ENCODE measurements at regions of chr5 and their contacts with region 1.

Region 1: GRCh38 chr5:139903795-139904565 is 108.4 kb downstream of the PSD2 start:
- DNase-seq: no peak
- ATAC-seq: peak in 3 of 4 donors; percentile 31 to 74 (median 62)
- H3K4me3 ChIP-seq: peak overlapping the region; percentile 14 to 65 (median 54)
- H3K27ac ChIP-seq: no peak overlapping the region
- H3K4me1 ChIP-seq: peaks cover 0 to 30% (median 16%) of the 10 kb centered on the region in 12 donors
- H3K27me3 ChIP-seq: peaks cover 0 to 47% (median 6%) of the 10 kb centered on the region in 9 donors
- CTCF ChIP-seq: peak in 1 of 12 donors; percentile 6
- POLR2A ChIP-seq: no peak

Region 2: DNA sequence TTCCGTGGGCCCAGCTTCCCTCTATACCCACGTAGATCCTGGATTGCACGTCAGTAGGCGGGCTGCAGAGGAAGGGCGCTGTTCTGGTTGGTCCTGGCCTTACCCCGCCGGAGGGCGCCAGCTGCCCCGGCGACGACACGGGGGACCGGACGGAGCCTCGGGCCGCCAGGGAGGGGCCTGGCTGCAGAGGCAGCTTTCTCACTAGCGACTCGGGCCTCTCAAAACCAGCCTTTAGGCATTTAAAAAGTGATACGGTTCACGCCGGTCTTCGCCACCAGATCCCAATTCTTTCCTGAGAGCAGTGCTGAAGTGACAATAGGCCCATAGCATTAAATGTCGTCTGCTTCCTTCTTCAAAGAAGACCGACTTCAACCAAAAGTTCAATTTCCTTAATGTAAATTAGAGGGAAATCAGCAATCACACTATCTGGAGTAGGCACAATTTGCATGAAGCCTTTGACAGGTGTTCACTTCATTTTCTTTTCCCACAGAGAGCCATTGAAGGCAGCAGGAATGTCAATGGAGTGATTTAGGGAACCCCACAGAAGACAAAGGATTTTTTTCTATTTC is 360.5 kb before region 1 on chr5:
- intact Hi-C with region 1: no loop called
- DNase-seq: peak; percentile 78 to 89 (median 85)
- ATAC-seq: peak; percentile 94 to 100 (median 100)
- H3K4me3 ChIP-seq: peak overlapping the region in 10 of 12 donors; percentile 14 to 51 (median 36)
- H3K27ac ChIP-seq: peak overlapping the region in 10 of 12 donors; percentile 23 to 68 (median 50)
- H3K4me1 ChIP-seq: peaks cover 0 to 11% (median 5%) of the 10 kb centered on the region in 12 donors
- H3K27me3 ChIP-seq: no peaks in the 10 kb centered on the region
- CTCF ChIP-seq: peak in 8 of 12 donors; percentile 23 to 61 (median 44)
- POLR2A ChIP-seq: no peak

Region 3: GRCh38 chr5:139960723-139961383 is 56.9 kb after region 1 on chr5:
- intact Hi-C with region 1: loop called in 2 of 10 experiments (anchors 5 to 10 kb)
- DNase-seq: no peak
- ATAC-seq: peak in 1 of 4 donors; percentile 4
- H3K4me3 ChIP-seq: no peak overlapping the region
- H3K27ac ChIP-seq: no peak overlapping the region
- H3K4me1 ChIP-seq: peaks cover 0 to 31% (median 3%) of the 10 kb centered on the region in 12 donors
- H3K27me3 ChIP-seq: no peaks in the 10 kb centered on the region
- CTCF ChIP-seq: no peak
- POLR2A ChIP-seq: no peak

Region 4: GRCh38 chr5:139982157-139982974 is 78.4 kb after region 1 on chr5:
- intact Hi-C with region 1: no loop called
- DNase-seq: peak in 3 of 5 donors; percentile 46 to 65 (median 59)
- ATAC-seq: peak in 1 of 4 donors; percentile 7
- H3K4me3 ChIP-seq: no peak overlapping the region
- H3K27ac ChIP-seq: no peak overlapping the region
- H3K4me1 ChIP-seq: peaks cover 0 to 53% (median 20%) of the 10 kb centered on the region in 12 donors
- H3K27me3 ChIP-seq: no peaks in the 10 kb centered on the region
- CTCF ChIP-seq: no peak
- POLR2A ChIP-seq: no peak

Measured in heart left ventricle (tissue), 16 donors.